Adrenal gland (tissue), 19 donors: ENCODE measurements at regions of chrX and their contacts with region 1.

Region 1: GRCh38 chrX:70096052-70096451 is 33.8 kb downstream of the OTUD6A start:
- DNase-seq: peak in 2 of 7 donors; percentile 2 to 46
- H3K4me3 ChIP-seq: no peak overlapping the region
- H3K27ac ChIP-seq: no peak overlapping the region
- H3K4me1 ChIP-seq: no peaks in the 10 kb centered on the region
- H3K27me3 ChIP-seq: peaks cover 13% of the 10 kb centered on the region
- CTCF ChIP-seq: peak in 1 of 6 experiments; percentile 9
- POLR2A ChIP-seq: no peak

Region 2: GRCh38 chrX:69493193-69493592 is 602.9 kb before region 1 on chrX:
- intact Hi-C with region 1: loop called in 1 of 2 experiments (anchors 5 kb)
- DNase-seq: peak in 6 of 7 donors; percentile 34 to 66 (median 50)
- H3K4me3 ChIP-seq: no peak overlapping the region
- H3K27ac ChIP-seq: no peak overlapping the region
- H3K4me1 ChIP-seq: no peaks in the 10 kb centered on the region
- H3K27me3 ChIP-seq: peaks cover 44% of the 10 kb centered on the region
- CTCF ChIP-seq: peak; percentile 33 to 64 (median 48)
- POLR2A ChIP-seq: no peak

Region 3: GRCh38 chrX:69503782-69504625 is 592.0 kb before region 1 on chrX and contains the start of gene NALF2:
- intact Hi-C with region 1: loop called in 1 of 2 experiments (anchors 10 kb)
- DNase-seq: peak; percentile 59 to 74 (median 71)
- H3K4me3 ChIP-seq: peak within 1 kb of the TSS in 2 of 4 donors; percentile 11 to 52
- H3K27ac ChIP-seq: peak within 1 kb of the TSS in 2 of 5 donors; percentile 38 to 49
- H3K4me1 ChIP-seq: no peaks in the 10 kb centered on the region
- H3K27me3 ChIP-seq: peaks cover 27% of the 10 kb centered on the region
- CTCF ChIP-seq: peak in 1 of 6 experiments; percentile 39
- POLR2A ChIP-seq: no peak
- total RNA-seq, gene NALF2: 0.22 to 1.2 (median 0.83) TPM

Region 4: DNA sequence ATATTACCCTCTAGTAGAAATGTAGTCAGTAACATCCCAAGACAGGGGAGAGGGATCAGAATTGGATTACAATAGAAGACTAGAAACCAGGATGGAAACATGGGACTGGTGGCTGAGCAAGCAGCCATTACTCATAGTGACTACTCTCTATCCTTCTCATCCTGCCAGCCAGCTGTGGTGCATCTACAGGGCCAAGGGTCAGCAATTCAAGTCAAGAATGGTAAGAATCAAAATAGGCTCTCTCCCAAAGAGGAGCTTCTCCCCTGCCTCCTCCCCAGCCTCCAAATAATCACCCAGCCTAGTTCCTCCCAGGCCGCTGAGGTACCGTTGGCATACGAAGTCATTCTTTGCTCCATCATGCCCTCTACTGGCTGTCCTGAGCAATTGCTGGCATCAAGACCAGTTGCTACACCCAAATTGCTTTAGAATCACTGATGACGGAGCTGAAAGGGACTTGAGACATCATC is 65.7 kb before region 1 on chrX:
- intact Hi-C with region 1: loop called in 1 of 2 experiments (anchors 10 kb)
- DNase-seq: peak; percentile 32 to 65 (median 40)
- H3K4me3 ChIP-seq: no peak overlapping the region
- H3K27ac ChIP-seq: no peak overlapping the region
- H3K4me1 ChIP-seq: no peaks in the 10 kb centered on the region
- H3K27me3 ChIP-seq: peaks cover 10% of the 10 kb centered on the region
- CTCF ChIP-seq: peak; percentile 57 to 84 (median 70)
- POLR2A ChIP-seq: no peak